Activated T-helper 1 cell treated with anti-CD3 and anti-CD28 coated beads, Interleukin-12 subunit alpha, Interleukin-12 subunit beta, Interleukin-2, Interleukin-4 antibody, amounts not matched to agents 30 ng/mL and 10 ng/mL and 1 ng/mL, durations not matched to agents 14 hours and 24 hours and 36 hours (primary cell): ENCODE measurements at regions of chr7 and their contacts with region 1.

Region 1: GRCh38 chr7:129224251-129225205 is at the start of gene AHCYL2:
- DNase-seq: peak; percentile 92
- H3K4me3 Mint-ChIP-seq: peak within 1 kb of the TSS; percentile 90
- H3K27ac Mint-ChIP-seq: peak within 1 kb of the TSS; percentile 87
- H3K4me1 Mint-ChIP-seq: peaks cover 31% of the 10 kb centered on the region
- H3K27me3 Mint-ChIP-seq: peaks cover 6% of the 10 kb centered on the region
- total RNA-seq, gene AHCYL2: 14.1 and 15.5 TPM in 2 replicates

Region 2: DNA sequence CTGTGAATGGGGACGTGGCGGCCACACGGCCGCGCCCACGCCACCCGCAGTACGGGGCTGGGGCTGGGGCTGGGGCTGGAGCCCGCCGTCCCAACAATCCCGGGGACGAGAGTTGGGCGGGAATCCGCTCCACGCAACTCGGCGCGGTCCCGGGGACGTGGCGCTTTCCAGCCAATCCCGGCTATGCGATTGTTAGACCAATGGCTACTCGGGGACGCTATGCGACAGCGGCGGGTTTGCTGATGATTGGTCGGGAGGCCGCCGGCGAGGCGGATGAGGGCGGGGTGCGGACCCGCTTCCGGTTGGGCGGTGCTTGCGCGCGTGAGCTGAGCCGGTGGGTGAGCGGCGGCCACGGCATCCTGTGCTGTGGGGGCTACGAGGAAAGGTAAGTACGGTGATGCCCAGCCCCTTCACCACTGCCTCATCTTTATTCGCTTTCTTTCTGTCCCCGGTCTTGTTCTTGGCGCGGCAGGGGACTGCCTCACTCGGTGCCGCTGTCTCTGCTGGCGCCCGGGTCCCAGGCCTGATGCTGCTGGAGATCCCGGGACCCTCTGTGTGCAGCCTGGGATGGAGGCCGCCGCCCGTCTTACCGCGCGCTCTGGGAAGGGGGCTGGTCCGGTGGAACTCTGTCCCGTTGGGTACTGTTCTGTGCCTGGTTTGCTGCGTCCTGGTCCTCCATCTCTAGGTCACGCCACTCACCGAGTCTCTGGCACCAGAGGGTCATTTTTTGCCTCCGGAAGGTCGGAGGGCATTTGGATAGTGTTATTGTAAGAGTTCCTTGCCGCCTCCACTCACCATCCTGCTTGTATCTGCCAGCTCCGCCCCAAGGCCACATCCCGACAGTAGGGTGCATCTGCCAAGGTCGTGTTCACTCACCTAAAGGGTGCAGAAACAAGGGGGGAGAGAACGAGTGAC is 485.2 kb before region 1 on chr7 and contains the start of gene CALU:
- intact Hi-C with region 1: loop called (anchors 2 kb)
- DNase-seq: peak; percentile 95
- H3K4me3 Mint-ChIP-seq: peak within 1 kb of the TSS; percentile 100
- H3K27ac Mint-ChIP-seq: peak within 1 kb of the TSS; percentile 99
- H3K4me1 Mint-ChIP-seq: peaks cover 26% of the 10 kb centered on the region
- H3K27me3 Mint-ChIP-seq: no peaks in the 10 kb centered on the region
- total RNA-seq, gene CALU: 52.8 and 59.2 TPM in 2 replicates

Region 3: GRCh38 chr7:129054438-129055293 is 169.9 kb before region 1 on chr7 and contains the start of gene TNPO3:
- intact Hi-C with region 1: loop called (anchors 1 kb)
- DNase-seq: peak; percentile 87
- H3K4me3 Mint-ChIP-seq: peak within 1 kb of the TSS; percentile 99
- H3K27ac Mint-ChIP-seq: peak within 1 kb of the TSS; percentile 99
- H3K4me1 Mint-ChIP-seq: peaks cover 28% of the 10 kb centered on the region
- H3K27me3 Mint-ChIP-seq: peaks cover 10% of the 10 kb centered on the region
- total RNA-seq, gene TNPO3: 52.8 and 53.2 TPM in 2 replicates

Region 4: GRCh38 chr7:129367700-129368388 is 143.3 kb after region 1 on chr7:
- intact Hi-C with region 1: loop called (anchors 1 kb)
- DNase-seq: peak; percentile 68
- H3K4me3 Mint-ChIP-seq: peak overlapping the region; percentile 73
- H3K27ac Mint-ChIP-seq: peak overlapping the region; percentile 88
- H3K4me1 Mint-ChIP-seq: peaks cover 58% of the 10 kb centered on the region
- H3K27me3 Mint-ChIP-seq: no peaks in the 10 kb centered on the region

Region 5: DNA sequence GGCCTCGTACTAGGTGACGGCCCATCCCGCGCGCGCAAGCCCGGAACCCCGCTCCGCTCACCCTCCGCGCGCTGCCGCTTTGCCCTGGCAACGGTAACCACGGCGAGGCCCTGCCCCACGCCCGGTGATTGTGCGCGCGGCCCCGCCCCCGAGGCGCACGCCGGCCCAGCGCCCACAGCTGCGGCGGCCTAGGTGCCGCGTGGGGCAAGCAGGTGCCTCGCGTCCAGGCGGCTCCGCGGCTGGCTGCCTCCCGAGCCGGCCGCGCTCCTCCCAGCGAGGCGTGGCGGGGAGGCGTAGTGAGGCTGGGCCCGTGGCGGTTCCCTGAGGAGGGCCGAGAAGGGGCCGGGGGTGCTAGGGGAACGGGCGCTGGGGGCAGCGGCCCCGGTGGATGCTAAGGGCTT is 277.8 kb after region 1 on chr7 and contains the start of gene SMKR1:
- intact Hi-C with region 1: loop called (anchors 1 kb)
- DNase-seq: peak; percentile 90
- H3K4me3 Mint-ChIP-seq: peak within 1 kb of the TSS; percentile 82
- H3K27ac Mint-ChIP-seq: peak within 1 kb of the TSS; percentile 86
- H3K4me1 Mint-ChIP-seq: peaks cover 19% of the 10 kb centered on the region
- H3K27me3 Mint-ChIP-seq: peaks cover 16% of the 10 kb centered on the region
- total RNA-seq, gene SMKR1: 4.8 and 5.7 TPM in 2 replicates

Region 6: GRCh38 chr7:130010689-130011412 is 786.3 kb after region 1 on chr7:
- intact Hi-C with region 1: loop called (anchors 5 kb)
- DNase-seq: peak; percentile 76
- H3K4me3 Mint-ChIP-seq: no peak overlapping the region
- H3K27ac Mint-ChIP-seq: peak overlapping the region; percentile 75
- H3K4me1 Mint-ChIP-seq: peaks cover 5% of the 10 kb centered on the region
- H3K27me3 Mint-ChIP-seq: no peaks in the 10 kb centered on the region